ENCODE measurements at regions of chr6 and their contacts with region 1.

Region 1: DNA sequence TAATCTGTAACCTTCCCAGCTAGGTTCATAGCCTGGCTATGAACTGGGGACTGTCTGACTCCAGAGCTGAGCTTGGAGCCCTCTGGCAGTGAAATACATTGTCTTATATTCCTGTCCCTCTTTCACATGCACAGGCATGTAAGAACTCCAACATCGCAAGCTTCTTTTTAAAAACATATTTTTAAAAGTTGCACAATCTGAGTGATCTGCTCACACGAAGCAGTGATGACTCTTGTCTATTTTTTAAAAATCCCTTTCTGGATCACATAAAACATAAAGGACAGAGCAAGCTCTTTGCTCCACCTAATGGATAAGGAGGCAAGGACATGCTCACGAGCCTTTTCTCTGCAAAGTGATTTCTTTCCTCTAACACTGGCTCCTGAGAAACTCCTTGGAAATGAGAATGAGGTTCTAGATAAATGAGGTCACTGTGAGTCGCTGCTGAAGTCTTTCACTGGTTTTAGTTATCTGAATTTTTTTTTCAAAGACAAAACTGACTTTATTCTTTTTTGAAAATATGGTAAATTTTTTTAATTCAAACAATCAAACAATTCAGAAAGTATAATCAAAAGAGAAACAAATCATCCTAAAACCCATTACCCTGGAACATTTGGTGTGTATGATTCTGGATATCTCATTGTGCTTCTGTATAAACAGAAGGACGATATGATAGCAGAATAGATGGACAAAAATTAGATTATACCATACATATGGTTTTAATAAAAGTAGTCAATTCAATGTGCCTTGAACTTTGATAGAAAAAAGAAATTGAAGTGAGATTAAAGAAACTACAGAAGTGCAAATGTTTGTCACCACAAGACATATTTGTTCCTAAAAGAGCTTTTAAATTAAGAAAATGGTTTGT is 30.8 kb downstream of the IL20RA start:
- DNase-seq: no peak
- H3K4me3 ChIP-seq: no peak overlapping the region
- H3K27ac ChIP-seq: no peak overlapping the region
- H3K4me1 ChIP-seq: peaks cover 0 to 5% (median 0%) of the 10 kb centered on the region in 4 experiments; a peak in 1 of 7 replicates
- H3K27me3 ChIP-seq: no peaks in the 10 kb centered on the region
- CTCF ChIP-seq: peak in 2 of 3 experiments; percentile 63 to 66; a peak in 3 of 4 replicates
- EP300 ChIP-seq: no peak
- POLR2A ChIP-seq: no peak
- RAD21 ChIP-seq: peak; percentile 69 to 76

Region 2: GRCh38 chr6:136956590-136957544 is 57.1 kb before region 1 on chr6:
- CTCF ChIA-PET with region 1: interaction called, 41 read pairs
- POLR2A ChIA-PET with region 1: no interaction called
- DNase-seq: peak; percentile 65 to 70
- H3K4me3 ChIP-seq: peak overlapping the region in 1 of 4 experiments; percentile 1; a peak in 1 of 8 replicates
- H3K27ac ChIP-seq: peak overlapping the region; percentile 35; the same call in 1 of the 2 replicates
- H3K4me1 ChIP-seq: peaks cover 0 to 33% (median 16%) of the 10 kb centered on the region in 4 experiments; a peak in 6 of 7 replicates
- H3K27me3 ChIP-seq: no peaks in the 10 kb centered on the region
- CTCF ChIP-seq: peak; percentile 32 to 49 (median 32)
- EP300 ChIP-seq: peak in 1 of 2 experiments; percentile 81; a peak in 2 of 3 replicates
- POLR2A ChIP-seq: no peak; a peak in 1 of 3 replicates
- RAD21 ChIP-seq: peak; percentile 25 to 48; a peak in 3 of 4 replicates

Region 3: GRCh38 chr6:136967876-136968752 is 45.9 kb before region 1 on chr6:
- CTCF ChIA-PET with region 1: interaction called, 69 read pairs
- POLR2A ChIA-PET with region 1: no interaction called
- DNase-seq: peak; percentile 53 to 81
- H3K4me3 ChIP-seq: no peak overlapping the region
- H3K27ac ChIP-seq: no peak overlapping the region
- H3K4me1 ChIP-seq: no peaks in the 10 kb centered on the region
- H3K27me3 ChIP-seq: no peaks in the 10 kb centered on the region
- CTCF ChIP-seq: peak; percentile 67 to 82 (median 78)
- EP300 ChIP-seq: no peak
- POLR2A ChIP-seq: no peak
- RAD21 ChIP-seq: peak; percentile 82 to 86

Region 4: GRCh38 chr6:137001299-137001976 is 12.5 kb before region 1 on chr6:
- CTCF ChIA-PET with region 1: interaction called, 32 read pairs
- POLR2A ChIA-PET with region 1: interaction called, 4 read pairs
- DNase-seq: peak in 1 of 2 experiments; percentile 62
- H3K4me3 ChIP-seq: peak overlapping the region in 3 of 4 experiments; percentile 31 to 51 (median 35); a peak in 6 of 8 replicates
- H3K27ac ChIP-seq: no peak overlapping the region
- H3K4me1 ChIP-seq: peaks cover 0 to 12% (median 7%) of the 10 kb centered on the region in 4 experiments; a peak in 4 of 7 replicates
- H3K27me3 ChIP-seq: no peaks in the 10 kb centered on the region; a peak in 1 of 7 replicates
- CTCF ChIP-seq: no peak
- EP300 ChIP-seq: no peak
- POLR2A ChIP-seq: no peak
- RAD21 ChIP-seq: no peak

Region 5: GRCh38 chr6:137025786-137026456 is 12.0 kb after region 1 on chr6:
- CTCF ChIA-PET with region 1: interaction called, 12 read pairs
- POLR2A ChIA-PET with region 1: interaction called, 3 read pairs
- DNase-seq: no peak
- H3K4me3 ChIP-seq: no peak overlapping the region
- H3K27ac ChIP-seq: no peak overlapping the region
- H3K4me1 ChIP-seq: no peaks in the 10 kb centered on the region
- H3K27me3 ChIP-seq: no peaks in the 10 kb centered on the region
- CTCF ChIP-seq: no peak
- EP300 ChIP-seq: no peak
- POLR2A ChIP-seq: no peak
- RAD21 ChIP-seq: no peak

Region 6: DNA sequence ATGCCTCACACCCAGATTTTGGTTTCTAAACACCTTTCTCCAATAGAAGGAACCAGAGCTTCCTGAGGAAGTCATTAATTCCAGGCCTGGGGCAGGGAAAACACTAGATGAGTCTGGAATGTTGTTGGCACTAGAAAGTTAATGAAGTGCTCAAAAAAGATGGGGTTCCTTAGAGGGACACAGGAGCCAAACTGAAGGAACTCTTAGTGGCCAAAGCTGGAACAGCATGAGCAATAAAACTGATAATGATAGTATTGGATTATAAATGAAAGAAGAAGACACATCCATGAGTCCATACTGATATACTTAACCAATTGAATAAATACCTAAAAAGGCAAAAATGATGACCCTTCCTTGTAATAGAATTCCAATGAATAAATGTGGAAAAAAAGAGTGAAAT is 26.4 kb after region 1 on chr6:
- CTCF ChIA-PET with region 1: interaction called, 10 read pairs
- POLR2A ChIA-PET with region 1: no interaction called
- DNase-seq: no peak
- H3K4me3 ChIP-seq: no peak overlapping the region
- H3K27ac ChIP-seq: no peak overlapping the region
- H3K4me1 ChIP-seq: no peaks in the 10 kb centered on the region
- H3K27me3 ChIP-seq: peaks cover 0 to 27% (median 16%) of the 10 kb centered on the region in 4 experiments; a peak in 6 of 7 replicates
- CTCF ChIP-seq: no peak
- EP300 ChIP-seq: no peak
- POLR2A ChIP-seq: no peak
- RAD21 ChIP-seq: no peak